Cardiac septum (tissue), 1 donor: ENCODE measurements at regions of chr6 and their contacts with region 1.

Region 1: GRCh38 chr6:53524455-53524815 is 20.5 kb downstream of the GCLC start:
- DNase-seq: no peak

Region 2: DNA sequence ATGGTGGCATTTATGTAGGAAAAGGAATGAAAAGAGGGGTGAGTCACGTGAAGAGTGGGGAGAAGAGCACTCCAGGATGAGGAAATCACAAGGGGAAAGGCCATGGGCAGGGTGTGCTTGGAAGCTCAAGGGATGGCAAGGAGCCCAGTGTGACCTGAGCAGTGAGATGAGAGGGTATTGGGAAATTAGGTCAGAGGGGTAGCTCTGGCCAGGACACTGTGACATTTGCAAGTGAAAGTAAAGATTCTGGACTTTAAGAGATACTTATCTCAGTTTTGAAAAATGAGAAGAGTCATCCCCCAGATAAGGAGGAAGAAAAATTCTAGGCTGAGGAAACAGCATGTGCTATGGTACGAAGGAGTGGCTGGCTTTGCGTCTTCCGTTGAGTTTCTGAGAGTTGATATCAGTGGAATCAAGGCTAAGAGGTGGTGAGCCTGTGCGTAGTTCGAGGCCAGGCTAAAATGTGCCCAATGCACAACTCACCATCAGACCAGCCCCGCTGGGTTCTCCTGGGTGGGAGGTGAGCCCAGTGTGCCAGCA is 59.4 kb before region 1 on chr6:
- intact Hi-C with region 1: no loop called
- DNase-seq: no peak

Region 3: DNA sequence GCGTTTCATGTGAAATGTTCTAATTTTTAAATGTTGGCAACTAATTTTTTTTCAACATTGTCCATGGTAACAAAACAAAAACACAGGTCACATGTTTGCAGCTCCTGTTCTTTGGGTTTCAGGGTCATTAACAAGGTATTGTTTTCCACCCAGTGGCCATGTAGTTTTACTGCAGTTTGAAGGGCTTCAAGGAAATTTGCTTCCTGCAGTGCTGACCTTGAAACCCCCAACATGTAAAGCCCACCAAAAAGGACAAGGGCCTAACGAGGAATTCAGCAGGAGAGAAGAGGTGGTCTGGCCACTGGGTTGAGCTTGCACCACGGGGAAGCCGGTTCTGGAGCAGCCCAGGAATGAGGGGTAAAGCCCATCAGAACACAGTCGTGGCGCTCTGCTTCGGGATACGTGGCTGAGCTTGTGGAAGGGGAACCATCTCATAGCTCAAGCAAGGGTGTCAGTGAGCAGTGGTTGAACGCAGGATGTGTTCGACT is 155.1 kb after region 1 on chr6:
- intact Hi-C with region 1: loop called (anchors 5 kb)
- DNase-seq: no peak